ENCODE measurements at regions of chr17 and their contacts with region 1.

Region 1: GRCh38 chr17:50626037-50626574 is 8.6 kb upstream of the ABCC3 start:
- DNase-seq: peak; percentile 77 to 87 (median 80)
- ATAC-seq: peak; percentile 96
- H3K4me3 ChIP-seq: no peak overlapping the region
- H3K27ac ChIP-seq: no peak overlapping the region
- H3K4me1 ChIP-seq: peaks cover 7 to 27% of the 10 kb centered on the region in 2 experiments; a peak in 4 of 5 replicates
- H3K27me3 ChIP-seq: peaks cover 18 to 37% of the 10 kb centered on the region in 2 experiments
- CTCF ChIP-seq: peak; percentile 81 to 91 (median 86)
- EP300 ChIP-seq: no peak
- POLR2A ChIP-seq: no peak
- RAD21 ChIP-seq: peak; percentile 80 to 86

Region 2: DNA sequence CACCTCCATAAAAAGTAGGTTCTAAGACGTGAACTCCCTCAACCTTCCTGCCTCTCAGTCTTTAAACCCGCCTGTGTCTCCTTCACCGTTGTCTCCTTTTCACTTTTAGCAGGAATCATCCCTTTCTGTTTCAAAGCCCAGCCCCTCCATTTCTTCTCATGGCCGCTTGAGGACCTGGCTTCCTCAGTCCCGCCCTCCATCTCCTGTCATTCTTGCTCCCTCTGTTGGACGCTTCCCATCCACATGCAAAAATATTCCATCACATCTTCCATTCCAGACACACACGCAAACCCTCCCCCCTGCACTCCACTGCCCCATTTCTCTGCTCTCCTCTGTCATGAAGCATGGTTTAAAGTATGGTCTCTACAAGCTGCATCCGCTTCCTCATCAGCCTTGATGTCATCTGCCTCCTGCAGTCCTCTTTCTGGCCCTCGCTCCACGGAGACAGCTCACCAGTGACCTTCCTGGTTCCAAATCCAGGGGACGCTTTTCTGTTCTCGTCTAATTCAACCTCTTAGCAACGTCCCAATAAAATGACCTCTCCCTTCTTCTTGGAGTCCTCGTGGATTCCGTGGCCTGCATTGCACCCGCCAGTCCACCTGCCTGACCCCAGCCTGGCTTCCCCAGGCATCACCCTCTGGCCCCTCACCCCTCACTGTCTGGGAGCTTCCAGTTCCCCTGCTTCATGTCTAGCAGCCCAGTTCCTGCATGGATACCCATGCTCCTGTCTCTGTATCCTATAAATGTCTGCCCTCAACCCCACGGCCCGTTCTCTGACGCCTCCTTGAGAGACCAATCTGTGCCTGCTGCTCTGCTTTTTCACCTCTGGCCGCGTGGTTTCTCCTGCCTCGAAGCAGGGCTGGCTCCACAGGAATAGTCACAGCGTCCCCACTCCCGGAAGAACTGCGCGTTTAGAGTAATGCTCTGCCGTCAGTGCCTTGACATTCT is 55.4 kb after region 1 on chr17:
- CTCF ChIA-PET with region 1: interaction called, 9 read pairs
- POLR2A ChIA-PET with region 1: interaction called, 3 read pairs
- in situ Hi-C with region 1: no loop called
- intact Hi-C with region 1: loop called (anchors 2 kb)
- DNase-seq: peak; percentile 73 to 79 (median 76)
- ATAC-seq: peak; percentile 86
- H3K4me3 ChIP-seq: no peak overlapping the region
- H3K27ac ChIP-seq: no peak overlapping the region
- H3K4me1 ChIP-seq: peaks cover 4 to 11% of the 10 kb centered on the region in 2 experiments; a peak in 3 of 5 replicates
- H3K27me3 ChIP-seq: peaks cover 5 to 31% of the 10 kb centered on the region in 2 experiments; a peak in 4 of 5 replicates
- CTCF ChIP-seq: peak; percentile 86 to 98 (median 97)
- EP300 ChIP-seq: no peak
- POLR2A ChIP-seq: no peak
- RAD21 ChIP-seq: peak; percentile 90 to 96

Region 3: GRCh38 chr17:50697663-50698274 is 71.7 kb after region 1 on chr17:
- CTCF ChIA-PET with region 1: no interaction called
- POLR2A ChIA-PET with region 1: interaction called, 3 read pairs
- in situ Hi-C with region 1: no loop called
- intact Hi-C with region 1: loop called (anchors 5 kb)
- DNase-seq: no peak
- ATAC-seq: no peak
- H3K4me3 ChIP-seq: no peak overlapping the region
- H3K27ac ChIP-seq: no peak overlapping the region
- H3K4me1 ChIP-seq: no peaks in the 10 kb centered on the region
- H3K27me3 ChIP-seq: no peaks in the 10 kb centered on the region
- CTCF ChIP-seq: peak in 2 of 3 experiments; percentile 11 to 16; a peak in 1 of 6 replicates
- EP300 ChIP-seq: no peak
- POLR2A ChIP-seq: no peak
- RAD21 ChIP-seq: 0 out of 4 replicates have a peak, but pooled peaks of 1 of the 2 experiments have one; percentile 2

Measured in K562 (cell line).